ENCODE measurements at regions of chr9 and their contacts with region 1.

Region 1: GRCh38 chr9:90458485-90458884 is 184.1 kb downstream of the DIRAS2 start:
- DNase-seq: peak; percentile 69
- H3K4me3 Mint-ChIP-seq: no peak overlapping the region
- H3K27ac Mint-ChIP-seq: no peak overlapping the region
- H3K4me1 Mint-ChIP-seq: peaks cover 9% of the 10 kb centered on the region
- H3K27me3 Mint-ChIP-seq: no peaks in the 10 kb centered on the region
- CTCF ChIP-seq: peak; percentile 61

Region 2: GRCh38 chr9:90393365-90394150 is 64.9 kb before region 1 on chr9:
- CTCF ChIA-PET with region 1: interaction called, 3 read pairs
- intact Hi-C with region 1: loop called (anchors 10 kb)
- DNase-seq: peak; percentile 76
- H3K4me3 Mint-ChIP-seq: peak overlapping the region; percentile 57
- H3K27ac Mint-ChIP-seq: peak overlapping the region; percentile 98
- H3K4me1 Mint-ChIP-seq: peaks cover 46% of the 10 kb centered on the region
- H3K27me3 Mint-ChIP-seq: no peaks in the 10 kb centered on the region
- CTCF ChIP-seq: no peak

Region 3: DNA sequence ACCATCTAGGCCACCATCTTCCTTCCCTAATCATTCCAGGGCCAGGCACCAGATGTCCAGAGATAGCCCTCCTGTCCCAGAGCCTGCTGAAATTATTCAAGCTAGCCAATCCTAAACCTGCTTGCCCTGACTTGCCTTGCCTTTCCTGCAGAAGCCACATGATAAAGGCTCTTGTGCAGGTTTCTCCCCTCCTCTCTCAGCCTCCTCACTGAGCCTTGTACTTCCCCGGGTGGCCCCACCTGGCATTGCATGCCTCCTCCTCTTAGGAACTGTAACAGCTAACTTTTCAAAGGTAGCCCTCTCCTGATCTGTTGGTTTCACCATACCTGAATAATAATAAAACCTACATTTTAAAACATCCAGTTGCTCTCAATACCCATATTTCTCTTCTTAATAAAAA is 141.5 kb after region 1 on chr9:
- CTCF ChIA-PET with region 1: no interaction called
- intact Hi-C with region 1: no loop called
- DNase-seq: no peak
- H3K4me3 Mint-ChIP-seq: no peak overlapping the region
- H3K27ac Mint-ChIP-seq: no peak overlapping the region
- H3K4me1 Mint-ChIP-seq: no peaks in the 10 kb centered on the region
- H3K27me3 Mint-ChIP-seq: no peaks in the 10 kb centered on the region
- CTCF ChIP-seq: no peak

Measured in Calu3 (cell line).